ENCODE measurements at regions of chr22 and their contacts with region 1.

Region 1: DNA sequence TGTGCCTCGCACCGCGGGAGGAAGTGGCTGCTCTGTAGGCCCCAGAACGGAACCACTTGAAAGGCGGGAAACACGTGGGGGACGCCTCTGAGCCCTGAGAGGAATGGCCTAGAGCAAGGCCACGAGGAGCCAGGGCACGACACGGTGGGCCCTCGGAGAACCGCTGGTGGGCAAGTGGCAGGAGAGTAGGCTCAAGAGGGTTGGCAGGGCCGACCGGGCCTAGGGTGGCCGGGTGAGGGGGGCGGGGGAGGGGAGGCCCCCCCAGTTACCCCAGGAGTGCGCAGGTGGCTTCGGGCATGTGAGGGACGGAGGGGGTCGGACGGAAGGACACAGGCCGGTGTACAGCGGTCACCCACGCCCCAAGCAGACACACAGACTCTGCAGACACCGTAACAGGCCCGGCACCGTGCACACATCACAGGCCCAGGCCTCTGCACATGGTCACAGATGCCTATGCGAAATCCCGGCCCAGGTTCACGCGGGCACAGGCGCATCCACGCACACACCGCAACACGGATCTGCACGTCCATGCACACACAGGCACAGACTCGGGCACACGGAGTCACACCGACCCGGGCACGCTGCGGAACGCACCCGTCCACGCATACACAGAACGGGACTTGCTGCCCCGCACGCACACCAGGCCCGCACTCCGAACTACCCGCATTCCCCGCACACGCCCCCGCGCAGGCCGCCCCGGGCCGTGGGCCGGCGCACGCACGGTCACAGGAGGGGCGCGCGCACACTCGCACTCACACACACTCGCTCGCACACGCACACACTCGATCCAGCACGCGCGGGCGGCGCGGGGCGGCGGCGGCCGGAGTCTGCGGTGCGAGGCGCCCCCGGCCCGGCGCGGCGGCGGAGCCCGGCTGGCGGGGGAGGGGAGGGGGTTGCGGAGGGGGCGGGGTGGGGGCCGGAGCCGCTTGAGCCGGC is at the start of gene MGAT3:
- DNase-seq: no peak
- ATAC-seq: peak; percentile 11
- H3K4me3 Mint-ChIP-seq: peak within 1 kb of the TSS; percentile 75
- H3K27ac Mint-ChIP-seq: peak within 1 kb of the TSS; percentile 65
- H3K4me1 Mint-ChIP-seq: peaks cover 67% of the 10 kb centered on the region
- H3K27me3 Mint-ChIP-seq: peaks cover 3% of the 10 kb centered on the region
- CTCF ChIP-seq: no peak
- total RNA-seq, gene MGAT3: 41.5 and 43.4 TPM in 2 replicates

Region 2: GRCh38 chr22:39292561-39293098 is 163.9 kb before region 1 on chr22:
- CTCF ChIA-PET with region 1: no interaction called
- POLR2A ChIA-PET with region 1: no interaction called
- intact Hi-C with region 1: no loop called
- DNase-seq: no peak
- ATAC-seq: no peak
- H3K4me3 Mint-ChIP-seq: no peak overlapping the region
- H3K27ac Mint-ChIP-seq: no peak overlapping the region
- H3K4me1 Mint-ChIP-seq: peaks cover 7% of the 10 kb centered on the region
- H3K27me3 Mint-ChIP-seq: no peaks in the 10 kb centered on the region
- CTCF ChIP-seq: no peak

Region 3: GRCh38 chr22:39471381-39472141 is 15.0 kb after region 1 on chr22:
- CTCF ChIA-PET with region 1: no interaction called
- POLR2A ChIA-PET with region 1: interaction called, 28 read pairs
- intact Hi-C with region 1: no loop called
- DNase-seq: peak; percentile 47
- ATAC-seq: peak; percentile 79
- H3K4me3 Mint-ChIP-seq: peak overlapping the region; percentile 65
- H3K27ac Mint-ChIP-seq: peak overlapping the region; percentile 90
- H3K4me1 Mint-ChIP-seq: peaks cover 73% of the 10 kb centered on the region
- H3K27me3 Mint-ChIP-seq: no peaks in the 10 kb centered on the region
- CTCF ChIP-seq: no peak